ENCODE measurements at regions of chr16 and their contacts with region 1.

Region 1: DNA sequence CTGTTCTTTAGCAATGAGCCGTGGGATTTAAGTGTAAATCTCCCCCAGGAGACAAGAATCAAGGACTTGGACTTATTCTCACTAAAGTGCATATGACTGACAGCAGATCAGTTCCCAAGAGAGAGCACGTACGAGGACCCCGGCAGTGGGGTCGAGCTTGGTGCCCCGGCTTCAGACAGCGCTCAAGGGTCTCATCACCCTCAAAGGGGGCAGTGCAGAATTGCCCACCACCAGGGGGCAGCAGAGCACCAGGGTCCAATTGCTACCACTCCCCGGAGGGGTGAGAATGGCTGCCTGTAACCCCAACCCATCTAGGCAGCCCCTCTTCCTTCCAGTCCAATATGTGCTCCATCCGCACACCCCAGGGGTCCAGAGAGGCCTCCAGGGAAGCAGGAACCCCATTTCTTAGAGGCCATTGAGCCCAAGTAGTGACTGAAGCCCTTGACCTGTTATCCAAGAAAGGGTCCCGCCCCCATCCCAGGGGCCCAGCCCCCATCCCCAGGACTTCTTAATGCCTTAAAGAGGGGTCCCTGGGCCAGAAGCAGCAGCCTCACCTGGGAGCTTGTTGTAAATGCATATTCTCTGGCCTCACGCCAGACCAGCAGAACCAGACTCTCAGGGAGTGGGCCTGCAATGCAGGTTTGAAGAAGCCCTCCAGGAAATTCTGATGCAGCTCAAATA is 86.1 kb downstream of the ZDHHC7 start:
- DNase-seq: peak; percentile 53
- ATAC-seq: peak; percentile 81
- H3K4me3 ChIP-seq: peak overlapping the region in 1 of 3 experiments; percentile 47; a peak in 2 of 6 replicates
- H3K27ac ChIP-seq: no peak overlapping the region
- H3K4me1 ChIP-seq: peaks cover 41% of the 10 kb centered on the region
- H3K27me3 ChIP-seq: peaks cover 3 to 36% of the 10 kb centered on the region in 2 experiments; a peak in 4 of 5 replicates
- CTCF ChIP-seq: peak; percentile 96
- EP300 ChIP-seq: no peak
- POLR2A ChIP-seq: no peak
- RAD21 ChIP-seq: peak; percentile 93

Region 2: DNA sequence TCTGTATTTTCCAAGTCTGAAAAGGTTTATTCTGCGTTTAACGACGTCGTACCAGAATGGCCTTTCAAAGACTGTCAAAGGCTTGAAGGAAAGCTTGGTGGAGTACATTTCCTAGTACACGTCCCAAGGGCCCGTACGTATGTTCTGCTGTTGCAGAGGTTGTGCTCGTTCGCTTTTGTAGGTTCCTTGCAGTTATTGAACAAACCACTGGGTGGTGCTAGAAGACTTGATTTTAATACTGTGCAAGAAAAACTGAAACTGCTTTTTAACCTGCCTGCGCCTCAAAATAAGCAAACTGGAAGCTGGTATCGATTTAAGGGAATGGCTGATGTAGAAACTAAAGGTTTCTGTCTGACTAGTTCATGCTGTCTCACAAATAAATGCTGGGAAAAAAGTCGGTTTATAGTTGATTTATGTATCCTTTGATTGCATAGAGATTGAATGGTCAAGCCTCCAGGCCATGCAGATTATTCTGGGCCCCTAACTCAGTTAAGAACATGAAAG is 170.8 kb before region 1 on chr16:
- CTCF ChIA-PET with region 1: interaction called, 4 read pairs
- POLR2A ChIA-PET with region 1: no interaction called
- in situ Hi-C with region 1: no loop called
- intact Hi-C with region 1: loop called (anchors 2 kb)
- DNase-seq: peak; percentile 83
- ATAC-seq: peak; percentile 89
- H3K4me3 ChIP-seq: no peak overlapping the region
- H3K27ac ChIP-seq: no peak overlapping the region
- H3K4me1 ChIP-seq: peaks cover 24% of the 10 kb centered on the region
- H3K27me3 ChIP-seq: no peaks in the 10 kb centered on the region
- CTCF ChIP-seq: peak; percentile 84
- EP300 ChIP-seq: no peak
- POLR2A ChIP-seq: no peak
- RAD21 ChIP-seq: peak; percentile 79

Region 3: DNA sequence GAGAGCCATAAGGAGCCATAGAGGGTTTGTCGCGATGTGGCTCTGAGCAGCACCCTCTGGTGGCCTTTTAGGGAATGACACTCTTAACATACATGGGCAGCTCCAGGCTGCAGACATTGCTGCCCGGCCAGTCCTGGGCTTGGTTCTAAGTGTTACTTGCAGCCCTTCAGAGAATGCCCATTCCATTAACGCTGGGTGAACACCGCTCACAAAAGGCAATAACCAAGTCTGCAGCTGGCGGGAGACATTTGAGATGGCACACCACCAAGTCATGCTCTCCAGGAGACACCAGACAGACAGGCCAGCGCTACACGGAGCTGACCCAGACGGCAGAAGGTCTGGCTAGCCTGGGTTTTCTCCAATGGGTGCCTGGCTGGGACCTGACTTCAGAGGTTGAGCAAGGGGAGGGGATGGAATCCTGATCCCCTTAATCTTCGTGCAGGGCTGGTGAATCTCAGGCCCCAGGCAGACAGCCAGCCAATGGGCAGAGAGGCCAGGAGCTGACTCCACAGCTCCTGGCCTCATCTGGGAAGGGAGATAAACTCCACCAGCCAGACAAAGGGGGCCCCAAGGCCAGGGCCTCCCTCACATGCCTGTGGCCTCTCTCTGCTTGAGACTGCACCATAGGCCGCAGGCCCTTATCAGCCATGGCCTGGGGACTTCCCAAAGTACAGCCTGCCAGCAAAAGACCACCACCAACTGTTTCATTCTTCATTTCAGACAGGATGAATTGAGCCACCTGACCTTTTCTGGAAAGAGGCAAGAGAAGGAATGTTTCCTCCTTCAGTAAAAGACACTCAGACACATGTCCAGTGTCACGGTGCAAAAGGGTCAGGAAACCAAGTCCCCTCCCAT is 27.3 kb after region 1 on chr16:
- CTCF ChIA-PET with region 1: interaction called, 57 read pairs
- POLR2A ChIA-PET with region 1: no interaction called
- in situ Hi-C with region 1: no loop called
- intact Hi-C with region 1: loop called (anchors 1 kb)
- DNase-seq: peak; percentile 83
- ATAC-seq: peak; percentile 83
- H3K4me3 ChIP-seq: peak overlapping the region; percentile 17 to 71 (median 20)
- H3K27ac ChIP-seq: peak overlapping the region; percentile 15
- H3K4me1 ChIP-seq: peaks cover 59% of the 10 kb centered on the region
- H3K27me3 ChIP-seq: peaks cover 0 to 4% of the 10 kb centered on the region in 2 experiments; a peak in 2 of 5 replicates
- CTCF ChIP-seq: peak; percentile 96
- EP300 ChIP-seq: no peak
- POLR2A ChIP-seq: no peak
- RAD21 ChIP-seq: peak; percentile 75

Region 4: DNA sequence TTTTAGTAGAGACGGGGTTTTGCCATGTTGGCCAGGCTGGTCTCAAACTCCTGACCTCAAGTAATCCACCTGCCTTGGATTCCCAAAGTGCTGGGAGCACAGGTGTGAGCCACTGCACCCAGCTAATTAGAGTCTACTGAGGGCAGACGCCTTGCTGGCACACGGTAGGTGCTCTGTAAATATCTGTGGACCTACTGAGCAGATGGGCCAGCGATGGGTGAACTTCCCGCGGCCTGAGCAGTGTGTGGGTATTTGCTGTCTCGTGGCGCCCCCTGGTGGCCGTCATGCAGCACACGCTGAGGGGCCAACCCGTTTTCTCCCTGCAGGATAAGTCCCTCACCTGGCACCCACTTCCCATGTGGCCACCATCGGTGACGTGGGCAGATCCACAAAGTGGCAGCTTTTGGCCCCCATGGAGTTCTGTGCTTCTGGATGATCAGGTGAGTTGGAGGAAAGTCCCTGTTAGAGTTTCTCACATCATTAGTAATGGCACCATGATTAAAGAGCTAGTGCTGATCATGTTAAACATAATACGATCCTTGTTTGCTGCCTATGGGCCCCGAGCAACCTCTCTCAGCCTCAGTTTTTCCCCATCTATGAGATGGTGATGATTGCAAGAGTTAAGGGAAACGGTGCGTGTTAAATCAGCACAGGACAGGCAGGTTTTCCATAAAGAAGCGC is 45.4 kb after region 1 on chr16:
- CTCF ChIA-PET with region 1: interaction called, 49 read pairs
- POLR2A ChIA-PET with region 1: interaction called, 3 read pairs
- in situ Hi-C with region 1: loop called (anchors 5 kb)
- intact Hi-C with region 1: loop called (anchors 1 kb)
- DNase-seq: peak; percentile 73
- ATAC-seq: peak; percentile 95
- H3K4me3 ChIP-seq: no peak overlapping the region
- H3K27ac ChIP-seq: no peak overlapping the region
- H3K4me1 ChIP-seq: peaks cover 7% of the 10 kb centered on the region
- H3K27me3 ChIP-seq: peaks cover 0 to 14% of the 10 kb centered on the region in 2 experiments; a peak in 2 of 5 replicates
- CTCF ChIP-seq: peak; percentile 99
- EP300 ChIP-seq: no peak
- POLR2A ChIP-seq: no peak
- RAD21 ChIP-seq: peak; percentile 98

Region 5: DNA sequence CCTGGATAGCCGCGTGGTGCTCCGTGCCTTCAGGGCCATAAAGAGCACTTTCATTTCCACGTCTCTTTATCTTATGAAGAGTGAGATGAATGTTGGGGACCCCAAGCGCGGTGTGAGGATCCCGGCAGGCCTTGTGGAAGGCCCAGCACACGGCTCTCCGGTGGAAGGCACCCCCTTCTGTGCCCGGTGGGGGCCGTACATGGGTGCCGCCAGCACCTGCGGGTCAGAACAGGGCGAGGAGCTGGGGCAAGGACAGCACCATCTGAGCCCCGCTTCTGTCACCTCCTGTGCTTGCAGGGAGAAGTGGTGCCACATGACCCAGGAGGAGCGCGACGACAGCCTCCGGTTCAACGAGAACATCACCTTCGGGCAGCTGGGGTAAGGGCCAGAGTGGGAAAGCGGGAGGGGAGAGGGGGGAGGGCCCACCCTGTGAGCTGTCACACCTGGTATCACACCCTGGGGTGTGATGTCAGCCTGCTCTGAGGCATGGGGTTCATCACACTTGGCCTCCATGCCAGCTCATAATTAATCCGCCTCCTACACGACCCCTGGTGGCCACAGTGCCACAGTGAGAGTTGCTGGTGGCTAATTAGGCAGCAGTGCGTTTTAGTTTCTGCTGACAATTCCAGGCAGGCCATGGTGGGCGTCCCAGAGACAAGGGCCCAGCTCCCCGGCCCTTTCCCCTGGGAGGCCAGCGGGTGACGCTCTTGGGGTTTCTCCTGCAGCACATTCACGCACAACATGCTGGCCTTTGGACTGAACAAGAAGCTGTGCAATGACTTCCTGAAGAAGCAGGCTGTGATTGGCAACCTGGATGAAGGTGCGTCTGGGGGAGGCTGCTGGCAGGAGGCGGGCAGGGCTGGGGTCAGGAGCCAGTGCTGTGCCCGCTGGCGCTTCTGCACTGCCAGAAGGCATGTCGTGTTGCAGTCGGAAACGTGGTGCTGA is 161.4 kb after region 1 on chr16:
- CTCF ChIA-PET with region 1: interaction called, 6 read pairs
- POLR2A ChIA-PET with region 1: no interaction called
- in situ Hi-C with region 1: no loop called
- intact Hi-C with region 1: loop called (anchors 1 kb)
- DNase-seq: peak; percentile 56
- ATAC-seq: peak; percentile 79
- H3K4me3 ChIP-seq: peak overlapping the region in 1 of 3 experiments; percentile 30; a peak in 1 of 6 replicates
- H3K27ac ChIP-seq: no peak overlapping the region
- H3K4me1 ChIP-seq: peaks cover 7% of the 10 kb centered on the region; the same call in 1 of the 2 replicates
- H3K27me3 ChIP-seq: peaks cover 23 to 84% of the 10 kb centered on the region in 2 experiments
- CTCF ChIP-seq: peak; percentile 92
- EP300 ChIP-seq: no peak
- POLR2A ChIP-seq: no peak
- RAD21 ChIP-seq: peak; percentile 64

Measured in HepG2 (cell line).